ENCODE measurements at regions of chr1 and their contacts with region 1.

Region 1: DNA sequence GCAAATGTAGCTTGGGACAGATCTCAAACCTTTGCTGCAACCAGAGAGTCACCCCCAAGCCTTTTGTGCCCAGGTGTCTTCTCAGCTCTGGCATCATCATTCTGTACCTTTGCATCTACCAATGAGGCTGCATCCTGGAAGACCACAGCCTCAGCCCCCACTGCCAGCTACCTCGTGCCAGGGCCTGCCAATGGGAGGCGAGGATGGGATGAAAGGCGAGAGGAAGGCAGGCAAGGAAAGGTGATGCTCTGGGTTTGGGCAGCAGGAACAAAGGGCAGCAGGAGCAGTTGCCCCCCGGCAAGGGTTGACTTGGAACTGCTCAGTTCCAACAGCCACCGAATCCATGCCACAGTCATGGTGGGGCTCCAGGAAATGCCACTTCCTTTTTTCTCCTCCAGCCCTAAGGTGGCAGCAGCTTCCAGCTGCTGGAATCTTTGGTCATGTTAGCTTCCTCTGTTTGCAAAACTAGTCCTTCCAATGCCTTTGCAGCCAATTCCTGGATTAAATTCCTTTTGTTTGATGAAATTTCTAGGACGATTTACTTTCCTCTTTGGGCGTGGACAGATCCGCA is 651.6 kb downstream of the NPHP4 start:
- DNase-seq: no peak
- H3K4me3 ChIP-seq: no peak overlapping the region
- H3K27ac ChIP-seq: no peak overlapping the region
- H3K4me1 ChIP-seq: no peaks in the 10 kb centered on the region
- H3K27me3 ChIP-seq: peaks cover 0 to 17% of the 10 kb centered on the region in 2 donors
- CTCF ChIP-seq: no peak
- POLR2A ChIP-seq: no peak

Region 2: GRCh38 chr1:5311634-5312292 is 28.9 kb before region 1 on chr1:
- intact Hi-C with region 1: loop called (anchors 1 kb)
- DNase-seq: no peak
- H3K4me3 ChIP-seq: no peak overlapping the region
- H3K27ac ChIP-seq: no peak overlapping the region
- H3K4me1 ChIP-seq: no peaks in the 10 kb centered on the region
- H3K27me3 ChIP-seq: peaks cover 0 to 34% of the 10 kb centered on the region in 2 donors
- CTCF ChIP-seq: no peak
- POLR2A ChIP-seq: no peak

Measured in breast epithelium (tissue), 4 donors.